Activated CD4-positive, alpha-beta memory T cell treated with anti-CD3 and anti-CD28 coated beads, Interleukin-2, amount 10 ng/mL, durations not matched to agents 7 days and 5 days (primary cell): ENCODE measurements at regions of chr12 and their contacts with region 1.

Region 1: DNA sequence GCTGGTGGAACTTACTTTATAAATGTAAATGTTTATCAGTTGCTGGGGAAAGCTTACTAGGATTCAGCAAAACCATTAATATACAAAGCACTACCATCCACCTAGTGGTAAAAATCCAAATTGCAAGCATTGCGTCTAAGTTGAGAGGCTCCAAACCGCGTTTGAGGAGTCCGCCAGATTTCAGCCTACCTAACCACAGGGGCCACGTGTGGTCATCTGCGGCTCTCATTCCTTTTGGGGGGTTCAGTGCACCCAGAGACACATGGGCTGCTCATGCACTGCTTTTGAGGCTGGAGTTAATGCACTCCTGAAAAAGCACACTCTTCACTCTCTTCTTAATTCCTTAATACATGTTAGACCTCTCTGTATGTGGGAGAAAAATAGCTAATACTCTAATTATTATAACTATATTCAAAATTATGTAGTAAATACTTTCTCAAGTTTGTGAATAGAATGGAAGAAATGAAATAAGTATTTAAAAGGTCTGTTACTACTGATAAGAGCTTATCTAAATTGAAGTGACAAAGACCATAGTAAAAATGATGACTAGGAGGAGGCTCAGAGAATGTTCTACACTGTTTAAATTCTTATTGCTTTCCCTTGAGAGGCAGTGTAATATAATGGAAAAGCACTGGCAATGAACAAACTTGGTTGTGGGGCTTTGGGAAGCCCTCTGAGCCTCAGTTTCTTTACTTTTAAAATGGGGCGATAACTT is 41.4 kb upstream of the MANSC4 start:
- DNase-seq: peak; percentile 33
- H3K4me3 Mint-ChIP-seq: no peak overlapping the region
- H3K27ac Mint-ChIP-seq: no peak overlapping the region
- H3K4me1 Mint-ChIP-seq: peaks cover 42% of the 10 kb centered on the region
- H3K27me3 Mint-ChIP-seq: peaks cover 58% of the 10 kb centered on the region

Region 2: GRCh38 chr12:27733052-27733656 is 88.3 kb before region 1 on chr12:
- CTCF ChIA-PET with region 1: interaction called, 31 read pairs
- POLR2A ChIA-PET with region 1: interaction called, 4 read pairs
- DNase-seq: peak; percentile 34
- H3K4me3 Mint-ChIP-seq: no peak overlapping the region
- H3K27ac Mint-ChIP-seq: no peak overlapping the region
- H3K4me1 Mint-ChIP-seq: no peaks in the 10 kb centered on the region
- H3K27me3 Mint-ChIP-seq: no peaks in the 10 kb centered on the region

Region 3: DNA sequence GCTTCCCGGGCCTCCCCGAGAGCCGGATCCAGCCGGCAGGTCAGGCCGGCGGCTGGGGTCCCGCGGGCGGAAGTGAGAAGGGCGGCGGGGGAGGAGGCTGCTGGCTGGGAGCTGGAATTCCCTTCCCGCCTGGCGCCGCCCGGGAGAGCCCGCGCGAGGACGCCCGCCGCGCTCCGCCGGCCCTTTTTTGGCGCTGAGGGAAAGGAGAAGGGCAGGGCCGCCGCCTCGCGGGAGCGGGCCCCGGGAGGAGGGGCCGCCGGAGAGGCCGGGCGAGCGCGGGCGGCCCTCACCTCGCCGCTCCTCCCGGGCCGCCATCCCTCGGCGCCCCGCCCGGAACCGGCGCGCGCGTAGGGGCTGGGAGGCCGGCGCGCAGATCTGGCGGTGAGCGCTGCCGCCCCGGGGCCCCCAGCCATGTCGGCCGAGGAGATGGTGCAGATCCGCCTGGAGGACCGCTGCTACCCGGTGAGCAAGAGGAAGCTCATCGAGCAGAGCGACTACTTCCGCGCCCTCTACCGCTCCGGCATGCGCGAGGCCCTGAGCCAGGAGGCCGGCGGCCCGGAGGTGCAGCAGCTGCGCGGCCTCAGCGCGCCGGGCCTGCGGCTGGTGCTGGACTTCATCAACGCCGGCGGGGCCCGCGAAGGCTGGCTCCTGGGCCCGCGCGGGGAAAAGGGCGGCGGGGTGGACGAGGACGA is 41.4 kb before region 1 on chr12 and contains the starts of genes KLHL42 and MANSC4:
- CTCF ChIA-PET with region 1: interaction called, 3 read pairs
- POLR2A ChIA-PET with region 1: interaction called, 23 read pairs
- DNase-seq: peak; percentile 74
- H3K4me3 Mint-ChIP-seq: peak within 1 kb of the TSS; percentile 80
- H3K27ac Mint-ChIP-seq: peak within 1 kb of the TSS; percentile 54
- H3K4me1 Mint-ChIP-seq: peaks cover 33% of the 10 kb centered on the region
- H3K27me3 Mint-ChIP-seq: peaks cover 17% of the 10 kb centered on the region
- total RNA-seq, gene KLHL42: 8.1 to 10.1 TPM
- total RNA-seq, gene MANSC4: not detected

Region 4: GRCh38 chr12:27787559-27787958 is 33.9 kb before region 1 on chr12:
- CTCF ChIA-PET with region 1: interaction called, 10 read pairs
- POLR2A ChIA-PET with region 1: no interaction called
- DNase-seq: no peak
- H3K4me3 Mint-ChIP-seq: no peak overlapping the region
- H3K27ac Mint-ChIP-seq: no peak overlapping the region
- H3K4me1 Mint-ChIP-seq: peaks cover 18% of the 10 kb centered on the region
- H3K27me3 Mint-ChIP-seq: no peaks in the 10 kb centered on the region

Region 5: GRCh38 chr12:27899151-27899661 is 77.8 kb after region 1 on chr12:
- CTCF ChIA-PET with region 1: no interaction called
- POLR2A ChIA-PET with region 1: no interaction called
- DNase-seq: no peak
- H3K4me3 Mint-ChIP-seq: no peak overlapping the region
- H3K27ac Mint-ChIP-seq: no peak overlapping the region
- H3K4me1 Mint-ChIP-seq: no peaks in the 10 kb centered on the region
- H3K27me3 Mint-ChIP-seq: peaks cover 4% of the 10 kb centered on the region